H1 (cell line): ENCODE measurements at regions of chr15 and their contacts with region 1.

Region 1: DNA sequence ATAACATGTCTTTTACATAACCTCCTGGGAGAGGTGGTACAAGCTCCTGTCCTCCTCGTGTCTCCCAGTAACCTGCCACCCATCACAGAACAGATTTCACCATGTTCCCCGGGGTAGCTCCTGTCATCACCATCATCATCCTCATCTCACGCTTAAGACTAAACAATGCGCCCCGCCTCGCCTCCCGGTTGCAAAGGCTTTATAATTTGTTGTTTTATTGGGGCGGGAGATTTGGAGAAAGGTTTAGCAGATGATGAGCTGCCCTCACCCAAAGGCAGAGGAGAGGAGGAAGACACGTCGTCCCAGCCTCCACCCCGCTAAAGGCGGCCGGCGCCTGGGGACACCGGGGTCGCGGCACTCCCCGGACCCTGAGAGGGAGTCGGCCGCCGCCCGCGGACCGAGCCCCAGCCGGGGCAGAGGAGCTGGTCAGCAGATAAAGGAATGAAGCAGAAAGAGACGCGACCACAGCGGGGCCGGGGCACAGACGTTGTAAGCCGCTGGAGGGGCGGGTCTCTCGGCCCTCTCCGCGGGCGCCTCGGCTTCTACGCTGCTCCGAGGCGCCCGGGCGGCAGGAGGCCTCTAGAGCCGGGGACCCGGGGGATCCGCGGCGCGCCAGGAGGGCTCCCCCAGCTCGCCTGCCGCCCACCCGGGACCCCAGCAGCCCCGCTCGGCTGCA is 589 bp downstream of the HERC1 start:
- DNase-seq: peak in 1 of 2 experiments; percentile 56
- H3K4me3 ChIP-seq: peak overlapping the region; percentile 68 to 99 (median 76)
- H3K27ac ChIP-seq: 0 out of 2 replicates have a peak overlapping the region, but pooled peaks have one; percentile 26
- H3K4me1 ChIP-seq: peaks cover 0 to 3% (median 0%) of the 10 kb centered on the region in 4 experiments; a peak in 3 of 7 replicates
- H3K27me3 ChIP-seq: no peaks in the 10 kb centered on the region
- CTCF ChIP-seq: no peak
- EP300 ChIP-seq: no peak
- POLR2A ChIP-seq: no peak
- RAD21 ChIP-seq: no peak

Region 2: GRCh38 chr15:63718590-63719035 is 114.5 kb before region 1 on chr15:
- CTCF ChIA-PET with region 1: no interaction called
- POLR2A ChIA-PET with region 1: no interaction called
- DNase-seq: no peak
- H3K4me3 ChIP-seq: no peak overlapping the region
- H3K27ac ChIP-seq: no peak overlapping the region
- H3K4me1 ChIP-seq: no peaks in the 10 kb centered on the region
- H3K27me3 ChIP-seq: no peaks in the 10 kb centered on the region
- CTCF ChIP-seq: no peak
- EP300 ChIP-seq: no peak
- POLR2A ChIP-seq: no peak
- RAD21 ChIP-seq: no peak

Region 3: GRCh38 chr15:63763476-63764123 is 69.6 kb before region 1 on chr15:
- CTCF ChIA-PET with region 1: no interaction called
- POLR2A ChIA-PET with region 1: interaction called, 10 read pairs
- DNase-seq: no peak
- H3K4me3 ChIP-seq: peak overlapping the region in 1 of 4 experiments; percentile 12; a peak in 1 of 8 replicates
- H3K27ac ChIP-seq: peak overlapping the region; percentile 80; the same call in 1 of the 2 replicates
- H3K4me1 ChIP-seq: peaks cover 9 to 47% (median 20%) of the 10 kb centered on the region in 4 experiments
- H3K27me3 ChIP-seq: no peaks in the 10 kb centered on the region
- CTCF ChIP-seq: no peak
- EP300 ChIP-seq: no peak
- POLR2A ChIP-seq: no peak
- RAD21 ChIP-seq: no peak

Region 4: DNA sequence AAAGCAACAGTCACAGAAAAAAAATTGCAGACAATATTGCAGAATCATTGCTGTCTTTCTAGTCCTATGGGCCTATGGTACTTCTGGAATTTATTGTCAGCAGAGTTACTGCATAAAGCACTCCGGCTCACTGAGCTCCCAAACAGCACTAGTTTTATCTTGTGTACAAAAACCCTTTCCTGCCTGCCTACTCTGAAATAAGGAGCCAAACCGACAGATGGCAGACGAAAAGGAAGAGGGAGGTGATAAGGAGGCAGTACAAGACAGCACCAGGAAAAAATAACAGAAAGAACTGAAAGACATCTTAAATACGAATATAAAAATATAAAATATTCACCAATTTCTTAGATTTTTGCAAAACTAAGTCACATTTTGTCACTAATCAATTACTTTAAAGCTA is 15.0 kb before region 1 on chr15:
- CTCF ChIA-PET with region 1: interaction called, 5 read pairs
- POLR2A ChIA-PET with region 1: interaction called, 18 read pairs
- DNase-seq: no peak
- H3K4me3 ChIP-seq: no peak overlapping the region
- H3K27ac ChIP-seq: no peak overlapping the region
- H3K4me1 ChIP-seq: peaks cover 0 to 19% (median 3%) of the 10 kb centered on the region in 4 experiments; a peak in 4 of 7 replicates
- H3K27me3 ChIP-seq: no peaks in the 10 kb centered on the region
- CTCF ChIP-seq: no peak
- EP300 ChIP-seq: no peak
- POLR2A ChIP-seq: no peak
- RAD21 ChIP-seq: no peak